Mammary epithelial cell (primary cell): ENCODE measurements at regions of chrX and their contacts with region 1.

Region 1: GRCh38 chrX:116490104-116490503 is 27.3 kb upstream of the CT83 start:
- DNase-seq: no peak
- H3K4me3 ChIP-seq: no peak overlapping the region
- H3K27ac ChIP-seq: no peak overlapping the region
- H3K4me1 ChIP-seq: no peaks in the 10 kb centered on the region
- H3K27me3 ChIP-seq: no peaks in the 10 kb centered on the region
- CTCF ChIP-seq: peak; percentile 39 to 45

Region 2: GRCh38 chrX:116480059-116480458 is 10.0 kb before region 1 on chrX:
- CTCF ChIA-PET with region 1: no interaction called
- dilution Hi-C with region 1: no loop called
- in situ Hi-C with region 1: no loop called
- intact Hi-C with region 1: no loop called
- DNase-seq: no peak
- H3K4me3 ChIP-seq: no peak overlapping the region
- H3K27ac ChIP-seq: no peak overlapping the region
- H3K4me1 ChIP-seq: no peaks in the 10 kb centered on the region
- H3K27me3 ChIP-seq: no peaks in the 10 kb centered on the region
- CTCF ChIP-seq: no peak

Region 3: DNA sequence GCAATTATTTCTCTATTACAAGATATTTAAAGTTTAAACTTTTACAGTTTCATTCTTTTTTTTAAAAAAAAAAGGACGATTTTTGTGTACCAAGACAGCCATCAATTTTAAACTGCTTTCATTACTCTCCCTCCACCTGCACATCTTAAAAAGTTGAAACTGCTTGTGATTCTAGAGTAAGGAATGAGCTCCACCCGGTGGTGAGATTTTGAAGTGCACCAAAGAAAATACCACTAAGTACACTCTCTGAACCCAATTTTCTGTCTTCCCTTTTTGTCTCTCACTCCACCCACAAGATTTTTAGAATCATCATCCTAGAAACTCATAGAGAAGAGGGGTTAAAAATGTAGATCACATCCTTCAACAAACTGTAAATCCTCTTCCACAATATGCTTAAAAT is 1764.5 kb after region 1 on chrX:
- CTCF ChIA-PET with region 1: interaction called, 4 read pairs
- dilution Hi-C with region 1: no loop called
- in situ Hi-C with region 1: loop called (anchors 25 kb)
- intact Hi-C with region 1: no loop called
- DNase-seq: peak; percentile 26
- H3K4me3 ChIP-seq: no peak overlapping the region
- H3K27ac ChIP-seq: no peak overlapping the region
- H3K4me1 ChIP-seq: no peaks in the 10 kb centered on the region
- H3K27me3 ChIP-seq: peaks cover 2% of the 10 kb centered on the region
- CTCF ChIP-seq: peak; percentile 70 to 73